GM10248 (cell line): ENCODE measurements at regions of chr5 and their contacts with region 1.

Region 1: GRCh38 chr5:137695651-137696428 is 40.0 kb downstream of the KLHL3 start:
- DNase-seq: peak; percentile 35
- CTCF ChIP-seq: peak; percentile 6

Region 2: GRCh38 chr5:137684761-137685160 is 11.1 kb before region 1 on chr5:
- CTCF ChIA-PET with region 1: interaction called, 22 read pairs
- POLR2A ChIA-PET with region 1: no interaction called
- DNase-seq: no peak
- CTCF ChIP-seq: no peak

Region 3: DNA sequence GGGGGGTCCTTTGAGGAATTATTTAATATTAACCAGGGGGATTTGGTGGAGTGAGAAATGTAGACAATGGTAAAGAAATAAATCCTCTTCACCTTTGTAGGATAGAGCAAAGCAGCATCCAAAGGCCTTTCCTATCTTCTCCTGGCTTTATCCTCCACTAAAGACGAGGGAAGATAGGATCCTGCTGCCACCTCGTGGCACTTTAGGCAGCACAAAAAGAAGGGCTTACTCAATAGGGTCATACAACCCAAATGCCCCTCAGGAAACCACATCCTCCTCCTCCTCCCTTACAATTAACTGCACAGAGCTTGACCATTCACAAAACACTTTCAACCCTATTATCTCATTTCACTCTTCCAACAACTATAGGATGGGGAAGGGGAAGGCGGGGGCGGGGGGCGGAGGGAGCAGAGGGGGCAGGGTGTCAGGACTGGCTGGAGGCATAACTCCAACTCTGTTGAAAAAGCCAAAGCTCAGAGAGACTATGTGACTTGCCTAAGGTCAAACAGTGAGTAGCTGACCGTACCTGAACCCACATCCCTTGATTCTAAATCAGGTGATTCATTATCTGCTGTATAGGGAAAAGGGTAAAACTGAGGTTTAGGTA is 126.4 kb after region 1 on chr5:
- CTCF ChIA-PET with region 1: no interaction called
- POLR2A ChIA-PET with region 1: no interaction called
- DNase-seq: peak; percentile 54
- CTCF ChIP-seq: peak; percentile 27